Activated CD4-positive, alpha-beta T cell treated with anti-CD3 and anti-CD28 coated beads for 36 hours (primary cell): ENCODE measurements at regions of chr15 and their contacts with region 1.

Region 1: DNA sequence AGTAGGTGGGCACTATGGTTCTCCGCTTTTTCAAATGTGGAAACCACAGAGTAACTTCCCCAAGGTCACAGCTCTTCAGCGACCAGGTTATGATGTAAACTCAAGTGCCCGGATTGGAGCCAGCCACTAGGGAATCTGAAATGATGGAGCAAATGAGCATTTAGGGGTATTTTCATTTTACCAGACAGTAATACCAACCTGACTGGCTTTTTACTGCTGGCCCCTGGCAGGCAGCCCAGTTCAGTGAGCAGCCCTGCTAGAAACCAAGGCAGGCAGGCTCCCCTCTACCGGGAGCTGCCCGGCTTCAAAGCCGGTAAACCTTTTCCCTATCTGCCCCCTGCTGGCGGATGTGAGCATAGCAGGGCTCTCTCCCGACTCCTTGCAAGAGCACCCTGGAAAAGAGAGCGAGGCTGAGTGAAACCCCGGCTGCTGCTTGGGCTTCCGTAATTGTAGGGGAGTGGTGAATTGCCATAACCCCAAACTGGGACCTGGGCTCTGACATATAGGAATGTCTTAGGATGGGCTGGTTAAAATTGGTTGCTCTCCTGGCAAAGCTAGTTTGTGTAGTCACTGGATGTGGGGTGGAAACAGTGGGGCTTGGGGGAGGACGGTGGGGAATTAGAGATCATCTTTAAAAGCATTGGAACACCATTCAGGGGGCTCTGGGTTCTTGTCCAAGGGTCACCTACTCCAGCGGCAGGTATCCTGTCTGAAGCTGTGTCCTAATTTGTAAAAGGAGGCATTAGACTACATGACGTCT is 98.0 kb upstream of the TNFAIP8L3 start:
- DNase-seq: peak; percentile 90
- ATAC-seq: peak; percentile 70
- H3K4me3 Mint-ChIP-seq: no peak overlapping the region
- H3K27ac Mint-ChIP-seq: no peak overlapping the region
- H3K4me1 Mint-ChIP-seq: no peaks in the 10 kb centered on the region
- H3K27me3 Mint-ChIP-seq: peaks cover 35% of the 10 kb centered on the region

Region 2: DNA sequence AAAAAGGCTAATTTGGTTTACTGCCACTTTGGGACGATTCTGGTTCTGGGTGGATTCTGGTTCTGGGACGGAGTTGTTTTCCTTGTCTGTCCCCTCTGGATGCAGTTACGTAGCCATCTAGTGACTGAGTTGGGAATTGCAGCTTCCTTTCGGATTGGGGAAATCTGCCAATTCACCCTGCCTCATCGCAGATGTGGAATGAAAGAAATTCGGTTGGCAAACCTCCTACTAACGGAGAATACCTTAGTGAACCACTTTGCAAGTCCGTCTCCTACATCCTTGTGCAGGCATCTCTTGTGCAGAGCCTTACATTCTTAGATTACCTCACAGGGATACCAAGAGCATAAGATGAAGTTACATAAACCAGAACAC is 315.7 kb before region 1 on chr15:
- CTCF ChIA-PET with region 1: no interaction called
- POLR2A ChIA-PET with region 1: no interaction called
- intact Hi-C with region 1: no loop called
- DNase-seq: peak; percentile 79
- ATAC-seq: no peak
- H3K4me3 Mint-ChIP-seq: peak overlapping the region; percentile 51
- H3K27ac Mint-ChIP-seq: peak overlapping the region; percentile 62
- H3K4me1 Mint-ChIP-seq: peaks cover 50% of the 10 kb centered on the region
- H3K27me3 Mint-ChIP-seq: peaks cover 12% of the 10 kb centered on the region

Region 3: DNA sequence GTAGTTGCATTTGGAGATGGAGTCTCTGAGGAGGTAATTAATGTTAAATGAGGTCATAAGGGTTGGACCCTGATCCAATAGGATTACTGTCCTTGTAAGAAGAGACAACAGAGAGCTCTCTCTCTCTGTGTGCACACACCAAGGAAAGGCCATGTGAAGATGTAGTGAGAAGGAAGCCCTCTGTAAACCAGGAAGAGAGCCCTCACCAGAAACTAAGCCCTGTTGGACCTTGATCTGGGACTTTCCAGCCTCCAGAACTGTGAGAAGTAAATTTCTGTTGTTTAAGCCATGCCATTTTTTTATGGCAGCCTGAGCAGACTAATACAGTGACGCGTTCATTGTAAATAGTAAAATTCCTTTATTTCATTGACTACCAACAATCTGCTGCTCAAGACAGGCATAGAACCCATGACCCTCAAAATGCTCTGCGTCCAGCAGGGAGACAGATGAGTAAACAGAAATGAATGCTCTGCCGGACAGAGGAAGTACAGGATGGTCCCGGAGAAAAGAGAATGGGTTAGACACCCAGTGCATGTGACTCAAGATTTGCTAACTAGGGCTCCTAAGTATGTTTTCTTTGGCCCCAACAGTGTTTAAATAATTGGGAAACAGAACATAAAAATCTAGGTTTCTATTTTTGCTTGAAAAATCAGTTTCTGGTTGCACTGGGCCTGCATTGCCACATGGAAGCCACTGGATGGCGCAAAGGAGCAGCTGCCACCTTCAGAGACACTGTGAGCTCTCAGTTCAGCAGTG is 60.1 kb before region 1 on chr15:
- CTCF ChIA-PET with region 1: interaction called, 8 read pairs
- POLR2A ChIA-PET with region 1: no interaction called
- intact Hi-C with region 1: loop called in 1 of 2 experiments (anchors 2 kb)
- DNase-seq: peak; percentile 48
- ATAC-seq: no peak
- H3K4me3 Mint-ChIP-seq: no peak overlapping the region
- H3K27ac Mint-ChIP-seq: no peak overlapping the region
- H3K4me1 Mint-ChIP-seq: no peaks in the 10 kb centered on the region
- H3K27me3 Mint-ChIP-seq: peaks cover 4% of the 10 kb centered on the region

Region 4: GRCh38 chr15:51172193-51172592 is 20.5 kb before region 1 on chr15:
- CTCF ChIA-PET with region 1: interaction called, 11 read pairs
- POLR2A ChIA-PET with region 1: no interaction called
- intact Hi-C with region 1: no loop called
- DNase-seq: no peak
- ATAC-seq: no peak
- H3K4me3 Mint-ChIP-seq: no peak overlapping the region
- H3K27ac Mint-ChIP-seq: no peak overlapping the region
- H3K4me1 Mint-ChIP-seq: no peaks in the 10 kb centered on the region
- H3K27me3 Mint-ChIP-seq: peaks cover 16% of the 10 kb centered on the region

Region 5: DNA sequence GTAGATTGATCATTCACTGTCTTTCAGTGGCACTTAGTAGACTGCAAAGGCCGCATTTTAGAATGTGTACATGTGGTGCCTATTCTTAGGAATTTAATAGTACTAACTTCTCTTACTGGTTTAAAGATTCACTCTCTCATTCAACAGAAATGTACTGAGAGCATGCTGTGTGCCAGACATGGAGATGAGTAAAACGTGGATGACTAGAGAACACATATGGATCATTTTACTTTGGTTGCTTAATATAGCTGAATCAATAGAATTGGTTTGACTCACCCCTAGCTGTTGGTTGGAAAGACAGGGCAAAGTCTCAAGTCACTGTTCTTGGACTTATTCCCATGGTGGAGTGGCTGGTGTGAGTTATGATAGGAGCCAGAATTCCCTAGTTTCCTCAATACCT is 11.1 kb after region 1 on chr15:
- CTCF ChIA-PET with region 1: interaction called, 10 read pairs
- POLR2A ChIA-PET with region 1: no interaction called
- intact Hi-C with region 1: no loop called
- DNase-seq: no peak
- ATAC-seq: no peak
- H3K4me3 Mint-ChIP-seq: no peak overlapping the region
- H3K27ac Mint-ChIP-seq: no peak overlapping the region
- H3K4me1 Mint-ChIP-seq: no peaks in the 10 kb centered on the region
- H3K27me3 Mint-ChIP-seq: peaks cover 7% of the 10 kb centered on the region